ENCODE measurements at regions of chr10 and their contacts with region 1.

Region 1: GRCh38 chr10:22086730-22087389 is 83.3 kb upstream of the DNAJC1 start:
- DNase-seq: peak; percentile 85 to 86
- ATAC-seq: peak; percentile 99
- H3K4me3 ChIP-seq: peak overlapping the region in 3 of 4 donors; percentile 6 to 32 (median 12)
- H3K27ac ChIP-seq: peak overlapping the region; percentile 62 to 72 (median 70)
- H3K4me1 ChIP-seq: peaks cover 13 to 16% of the 10 kb centered on the region in 2 donors
- H3K27me3 ChIP-seq: no peaks in the 10 kb centered on the region
- CTCF ChIP-seq: no peak
- POLR2A ChIP-seq: no peak

Region 2: GRCh38 chr10:22251751-22252223 is 164.9 kb after region 1 on chr10:
- in situ Hi-C with region 1: no loop called
- intact Hi-C with region 1: loop called (anchors 10 kb)
- DNase-seq: peak; percentile 16 to 35
- ATAC-seq: peak; percentile 68 to 74
- H3K4me3 ChIP-seq: peak overlapping the region; percentile 72 to 84 (median 80)
- H3K27ac ChIP-seq: peak overlapping the region; percentile 84 to 87 (median 86)
- H3K4me1 ChIP-seq: peaks cover 7 to 9% of the 10 kb centered on the region in 2 donors
- H3K27me3 ChIP-seq: no peaks in the 10 kb centered on the region
- CTCF ChIP-seq: no peak
- POLR2A ChIP-seq: no peak

Measured in gastrocnemius medialis (tissue), 4 donors.